ENCODE measurements at regions of chr19 and their contacts with region 1.

Region 1: DNA sequence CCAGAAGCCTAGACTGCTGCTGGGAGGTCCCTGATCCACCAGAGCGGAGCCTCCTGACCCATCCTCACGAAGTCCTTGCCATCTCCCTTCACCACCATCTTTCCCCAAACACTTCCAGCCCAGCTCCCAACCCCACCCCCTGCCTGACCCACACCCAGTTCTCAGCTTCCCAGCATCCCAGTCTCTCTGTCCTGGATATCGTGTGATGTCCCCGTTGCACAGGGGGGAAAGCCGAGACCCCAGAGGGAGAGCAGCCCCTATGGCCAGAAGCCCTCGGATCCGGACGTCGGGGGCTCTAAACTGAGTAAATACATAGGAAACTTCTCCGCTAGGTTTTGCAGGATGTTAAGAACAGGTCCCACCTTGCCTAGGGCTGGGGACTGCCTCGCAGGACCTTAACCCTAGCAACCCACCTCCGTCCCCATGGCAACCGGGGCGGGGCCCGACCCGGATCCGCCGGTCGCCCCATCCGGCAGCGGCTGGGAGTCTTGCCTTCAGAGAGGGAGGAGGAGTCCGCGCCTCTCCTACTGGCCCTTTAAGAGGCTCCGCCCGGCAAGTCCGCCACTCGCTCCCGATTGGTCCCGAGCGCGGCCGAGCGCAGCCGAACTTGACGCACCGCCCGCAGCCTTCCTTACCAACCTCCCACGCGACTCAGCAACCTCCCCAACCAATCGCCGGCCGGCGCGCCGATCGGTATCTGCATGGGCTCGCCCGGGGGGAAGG is 451 bp upstream of the HMG20B start:
- DNase-seq: peak; percentile 100

Region 2: DNA sequence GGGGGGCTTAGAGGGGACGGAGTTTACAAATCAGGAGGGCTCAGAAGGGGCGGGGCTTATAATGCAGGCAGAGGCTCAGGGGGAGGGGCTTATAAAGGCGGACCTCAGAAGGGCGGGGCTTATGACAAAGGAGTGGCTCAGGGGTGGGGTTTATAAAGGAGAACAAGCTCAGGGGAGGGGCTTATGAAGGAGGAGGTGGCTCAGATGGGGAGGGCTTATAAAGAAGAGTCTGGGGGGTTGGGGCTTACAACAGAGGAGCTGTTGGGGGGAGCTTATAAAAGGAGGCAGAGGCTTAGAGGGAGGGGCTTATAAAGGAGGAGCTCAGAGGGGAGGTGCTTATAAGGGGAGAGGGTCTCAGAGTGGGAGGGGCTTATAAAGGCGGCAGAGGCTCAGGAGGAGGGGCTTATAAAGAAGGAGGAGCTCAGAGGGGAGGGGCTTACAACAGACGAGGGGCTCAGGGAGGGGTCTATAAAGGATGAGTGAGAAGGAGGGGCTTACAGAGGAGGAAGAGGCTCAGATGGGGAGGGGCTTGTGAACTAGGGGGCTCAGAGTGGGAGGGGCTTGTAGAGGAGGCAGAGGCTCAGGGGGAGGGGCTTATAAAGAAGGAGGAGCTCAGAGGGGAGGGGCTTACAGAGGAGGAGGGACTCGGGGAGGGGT is 93.0 kb before region 1 on chr19:
- intact Hi-C with region 1: no loop called
- DNase-seq: no peak

Region 3: DNA sequence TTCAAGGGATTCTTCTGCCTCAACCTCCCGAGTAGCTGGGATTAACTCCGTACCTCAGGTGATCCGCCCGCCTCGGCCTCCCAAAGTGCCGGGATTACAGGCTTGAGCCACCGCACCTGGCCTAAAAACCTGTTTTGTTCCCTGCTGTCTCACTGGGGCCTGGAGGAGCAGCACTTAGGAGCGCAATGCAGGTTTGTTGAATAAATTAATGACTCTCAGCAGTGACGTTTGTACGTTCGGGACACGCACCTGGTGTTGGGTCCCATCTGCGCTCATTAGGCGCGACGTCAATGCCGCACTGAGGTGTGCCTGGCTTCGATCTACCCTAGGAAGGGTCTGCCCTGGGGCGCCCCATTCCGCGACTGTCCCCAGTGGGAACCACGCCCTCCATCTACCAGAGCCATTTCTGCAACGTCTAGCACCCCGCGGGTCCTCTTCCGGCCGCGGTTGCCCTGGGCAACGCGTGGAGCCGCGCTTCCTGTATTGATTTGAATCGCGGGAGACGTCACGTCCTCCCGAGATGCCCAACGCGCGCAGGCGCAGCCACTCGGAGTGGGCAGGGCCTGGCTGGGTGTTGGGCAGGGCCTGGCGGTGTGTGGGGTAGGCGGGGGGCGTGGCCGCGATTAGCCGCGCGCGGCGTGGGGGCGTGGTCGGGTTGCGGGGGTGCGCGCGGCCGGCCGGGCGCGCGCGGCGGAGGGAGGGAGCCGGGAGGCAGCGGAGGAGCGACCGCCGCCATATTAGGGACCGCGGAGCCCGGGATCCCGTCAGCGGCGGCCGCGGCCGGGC is 66.5 kb before region 1 on chr19 and contains the start of gene FZR1:
- intact Hi-C with region 1: loop called (anchors 5 kb)
- DNase-seq: peak; percentile 100
- total RNA-seq, gene FZR1: 23.8 TPM

Region 4: GRCh38 chr19:3544742-3545668 is 27.3 kb before region 1 on chr19:
- intact Hi-C with region 1: no loop called
- DNase-seq: peak; percentile 90

Region 5: DNA sequence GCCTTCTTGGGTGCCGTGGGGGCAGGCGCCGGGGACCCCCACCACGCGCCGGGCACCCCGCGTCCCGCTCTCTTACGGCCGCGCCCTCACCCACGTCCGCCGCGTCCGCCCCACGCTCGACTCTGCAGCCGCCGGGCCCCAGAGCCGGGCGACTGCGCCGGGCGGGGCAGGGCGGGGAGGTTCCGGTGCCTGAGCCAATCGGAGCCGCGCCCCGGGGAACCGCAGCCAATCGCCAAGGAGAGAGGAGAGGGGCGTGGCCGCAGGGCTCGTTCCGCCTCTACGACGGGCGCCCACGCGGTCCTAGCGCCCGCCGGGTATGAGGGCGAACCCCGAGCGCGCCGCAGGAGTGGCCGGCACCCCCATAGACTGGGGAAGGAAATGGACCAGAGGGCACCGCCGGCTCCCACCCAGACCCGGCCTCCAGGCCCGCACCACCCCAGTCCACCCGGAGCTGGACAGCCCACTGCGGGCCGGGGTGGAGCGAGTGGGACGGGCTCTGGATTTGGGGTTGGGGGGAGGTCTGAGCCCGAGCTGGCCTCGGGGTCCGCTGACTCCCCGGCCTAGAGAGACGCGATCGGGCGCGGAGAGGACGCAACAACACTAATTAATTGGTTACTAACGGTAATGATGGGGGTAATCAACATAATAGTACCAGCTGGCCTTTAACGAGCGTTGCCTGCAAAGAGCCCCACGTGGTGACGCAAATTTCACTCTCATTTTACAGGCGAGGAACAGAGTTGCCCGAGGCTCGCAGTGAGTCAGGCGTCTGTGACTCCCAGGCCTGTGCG is 14.6 kb before region 1 on chr19 and contains the start of gene MFSD12:
- intact Hi-C with region 1: loop called (anchors 1 kb)
- DNase-seq: peak; percentile 97
- total RNA-seq, gene MFSD12: 25.4 TPM